H1 (cell line): ENCODE measurements at regions of chr11 and their contacts with region 1.

Region 1: DNA sequence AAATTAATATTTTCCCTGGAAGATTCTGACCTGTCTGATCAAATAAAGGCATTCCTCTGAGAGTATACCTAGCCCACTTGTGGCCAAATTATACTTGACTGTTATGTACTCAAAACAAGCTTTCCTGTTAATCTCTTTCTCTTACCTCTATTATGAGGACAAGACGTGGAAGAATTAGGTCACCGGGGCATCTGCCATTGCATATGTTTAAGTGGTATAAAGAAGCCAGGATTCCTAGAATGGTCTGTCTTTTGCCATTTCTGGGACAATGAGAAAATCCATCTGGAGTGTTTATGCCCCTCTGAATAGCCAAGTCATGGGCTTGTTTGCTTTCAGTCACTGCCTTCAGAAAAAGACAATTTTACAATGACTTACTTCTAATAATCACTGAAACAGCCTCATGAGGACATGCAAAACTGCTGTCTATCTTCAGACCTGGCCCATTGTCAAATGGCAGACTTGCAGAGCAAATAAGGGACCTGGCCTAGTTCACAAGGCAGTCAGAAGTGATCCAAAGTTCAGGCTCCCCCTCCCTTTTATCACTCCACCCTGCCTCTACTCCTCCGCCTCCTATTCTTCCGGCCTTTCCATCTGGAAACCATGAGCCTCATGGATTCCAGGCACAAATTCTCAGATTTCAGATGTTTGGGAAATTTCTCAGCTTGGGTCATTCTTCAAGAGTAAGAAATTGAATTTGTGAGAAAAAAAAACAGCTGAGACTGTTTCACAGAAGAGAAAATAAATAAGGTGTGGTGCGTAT is 128.1 kb upstream of the LDLRAD3 start:
- DNase-seq: no peak
- H3K4me3 ChIP-seq: no peak overlapping the region
- H3K27ac ChIP-seq: no peak overlapping the region
- H3K4me1 ChIP-seq: no peaks in the 10 kb centered on the region
- H3K27me3 ChIP-seq: no peaks in the 10 kb centered on the region
- CTCF ChIP-seq: no peak
- EP300 ChIP-seq: no peak
- POLR2A ChIP-seq: no peak
- RAD21 ChIP-seq: no peak

Region 2: GRCh38 chr11:35838071-35838470 is 22.3 kb after region 1 on chr11:
- CTCF ChIA-PET with region 1: interaction called, 187 read pairs
- POLR2A ChIA-PET with region 1: no interaction called
- DNase-seq: no peak
- H3K4me3 ChIP-seq: no peak overlapping the region
- H3K27ac ChIP-seq: no peak overlapping the region
- H3K4me1 ChIP-seq: no peaks in the 10 kb centered on the region
- H3K27me3 ChIP-seq: no peaks in the 10 kb centered on the region
- CTCF ChIP-seq: no peak
- EP300 ChIP-seq: no peak
- POLR2A ChIP-seq: no peak
- RAD21 ChIP-seq: no peak

Region 3: GRCh38 chr11:35968386-35969088 is 152.8 kb after region 1 on chr11:
- CTCF ChIA-PET with region 1: no interaction called
- POLR2A ChIA-PET with region 1: no interaction called
- DNase-seq: no peak
- H3K4me3 ChIP-seq: no peak overlapping the region
- H3K27ac ChIP-seq: no peak overlapping the region
- H3K4me1 ChIP-seq: peaks cover 0 to 4% (median under 1%) of the 10 kb centered on the region in 4 experiments; a peak in 1 of 7 replicates
- H3K27me3 ChIP-seq: no peaks in the 10 kb centered on the region
- CTCF ChIP-seq: no peak
- EP300 ChIP-seq: no peak
- POLR2A ChIP-seq: no peak
- RAD21 ChIP-seq: no peak